ENCODE measurements at regions of chr7 and their contacts with region 1.

Region 1: DNA sequence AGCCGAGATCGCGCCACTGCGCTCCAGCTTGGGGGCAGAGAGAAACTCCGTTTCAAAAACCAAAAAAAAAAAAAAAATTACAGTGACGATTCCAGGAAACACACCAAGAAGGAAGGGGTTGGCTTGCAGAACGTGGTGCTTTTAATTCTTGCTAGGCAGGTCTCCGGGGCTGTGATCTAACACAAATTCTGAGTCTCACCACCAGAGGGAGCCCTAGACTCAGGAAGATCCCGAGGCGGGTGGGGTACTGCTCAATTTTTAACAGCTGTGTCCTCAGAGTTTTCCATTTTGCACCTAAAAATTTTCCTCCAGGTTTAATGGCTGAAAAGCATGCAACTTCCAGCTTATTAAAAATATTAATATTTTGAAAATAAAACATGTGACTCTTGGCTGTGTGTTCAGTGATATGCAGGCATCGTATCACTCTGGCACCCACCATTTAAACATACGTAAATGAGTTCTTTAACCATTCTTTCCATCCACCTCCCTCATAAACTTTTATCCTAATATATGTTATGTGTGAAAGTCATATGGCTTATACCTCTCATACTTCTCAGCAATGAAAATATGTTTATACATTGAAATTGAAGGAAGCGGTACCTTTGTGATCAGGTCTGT is 26.5 kb upstream of the NUB1 start:
- DNase-seq: peak; percentile 63 to 85 (median 78)
- H3K4me3 ChIP-seq: no peak overlapping the region
- H3K4me3 Mint-ChIP-seq: peak overlapping the region in 2 of 7 donors; percentile 44 to 64
- H3K27ac ChIP-seq: no peak overlapping the region
- H3K27ac Mint-ChIP-seq: peak overlapping the region in 2 of 8 donors; percentile 51 to 88
- H3K4me1 ChIP-seq: no peaks in the 10 kb centered on the region
- H3K4me1 Mint-ChIP-seq: peaks cover 3 to 5% (median 4%) of the 10 kb centered on the region in 3 donors
- H3K27me3 ChIP-seq: no peaks in the 10 kb centered on the region
- H3K27me3 Mint-ChIP-seq: peaks cover 0 to 4% of the 10 kb centered on the region in 2 donors

Region 2: DNA sequence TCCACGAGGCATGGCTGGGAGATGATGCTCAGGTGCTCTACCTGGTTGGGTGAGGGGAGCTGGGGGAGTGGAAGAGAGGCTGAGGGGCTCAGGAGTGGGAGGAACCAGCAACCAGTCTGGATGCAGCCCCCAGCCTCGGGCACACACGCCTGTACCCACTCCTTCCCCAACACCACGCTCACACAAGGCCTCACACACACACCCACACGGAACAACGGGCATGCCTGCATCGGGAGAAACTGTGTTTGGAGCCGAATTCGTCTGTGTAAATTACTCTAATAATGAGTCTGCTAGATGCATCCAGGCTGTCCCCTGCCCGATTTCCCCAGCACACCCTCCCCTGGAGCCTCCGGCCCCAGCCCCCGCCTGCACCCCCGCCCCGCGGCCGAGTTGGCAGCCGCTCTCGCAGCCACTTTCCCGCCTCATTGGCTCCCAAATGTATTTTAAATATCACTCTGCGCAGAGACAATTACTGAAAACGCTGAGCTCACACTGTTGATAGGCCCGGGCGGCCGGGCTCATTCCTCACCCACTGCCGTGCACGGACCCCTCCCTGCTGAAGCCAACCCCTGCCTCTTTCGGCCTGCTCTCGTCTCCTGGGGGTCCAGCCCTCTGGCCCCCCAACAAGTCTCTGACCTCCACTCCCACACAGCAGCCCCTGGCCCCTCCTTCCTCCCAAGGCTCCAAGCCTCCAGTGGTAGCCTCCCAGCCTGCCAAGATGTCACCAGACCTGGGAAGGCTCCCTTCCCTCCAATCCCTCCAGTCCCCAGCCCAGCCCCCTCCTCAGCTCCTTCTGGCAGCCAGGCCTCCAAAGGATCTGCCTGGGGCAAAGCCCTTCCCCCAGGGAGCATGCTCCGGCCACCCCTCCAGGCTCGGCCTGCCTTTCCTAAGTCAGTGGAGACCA is 116.0 kb before region 1 on chr7:
- CTCF ChIA-PET with region 1: no interaction called
- POLR2A ChIA-PET with region 1: no interaction called
- DNase-seq: no peak
- H3K4me3 ChIP-seq: no peak overlapping the region
- H3K4me3 Mint-ChIP-seq: no peak overlapping the region
- H3K27ac ChIP-seq: no peak overlapping the region
- H3K27ac Mint-ChIP-seq: peak overlapping the region in 1 of 8 donors; percentile 67
- H3K4me1 ChIP-seq: no peaks in the 10 kb centered on the region
- H3K4me1 Mint-ChIP-seq: peaks cover 8% of the 10 kb centered on the region in 3 donors
- H3K27me3 ChIP-seq: peaks cover 11% of the 10 kb centered on the region
- H3K27me3 Mint-ChIP-seq: peaks cover 5 to 9% of the 10 kb centered on the region in 2 donors

Region 3: DNA sequence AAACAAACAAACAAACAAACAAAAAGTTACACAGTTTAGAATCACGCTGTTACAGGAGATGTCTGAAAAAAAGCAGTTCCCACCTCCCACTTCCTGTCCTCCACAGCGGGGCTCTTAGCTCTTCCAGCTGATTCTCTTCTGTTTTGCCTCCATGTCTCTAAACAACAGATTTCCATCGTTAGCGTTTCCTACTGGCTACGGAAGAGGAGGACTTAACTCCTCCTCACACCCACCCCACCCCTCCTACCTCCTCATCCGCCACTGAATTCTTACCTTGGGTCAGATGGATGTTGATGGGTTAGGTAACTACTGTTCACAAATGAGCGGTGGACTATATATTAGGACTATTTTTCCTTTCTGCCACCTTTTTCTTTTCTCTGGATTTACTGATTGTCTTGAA is 10.3 kb before region 1 on chr7:
- CTCF ChIA-PET with region 1: interaction called, 22 read pairs
- POLR2A ChIA-PET with region 1: interaction called, 4 read pairs
- DNase-seq: no peak
- H3K4me3 ChIP-seq: no peak overlapping the region
- H3K4me3 Mint-ChIP-seq: peak overlapping the region in 3 of 7 donors; percentile 2 to 19 (median 11)
- H3K27ac ChIP-seq: no peak overlapping the region
- H3K27ac Mint-ChIP-seq: no peak overlapping the region
- H3K4me1 ChIP-seq: peaks cover 4% of the 10 kb centered on the region
- H3K4me1 Mint-ChIP-seq: peaks cover 6 to 8% (median 7%) of the 10 kb centered on the region in 3 donors
- H3K27me3 ChIP-seq: peaks cover 4% of the 10 kb centered on the region
- H3K27me3 Mint-ChIP-seq: peaks cover 18 to 54% of the 10 kb centered on the region in 2 donors

Region 4: GRCh38 chr7:151334628-151335027 is 19.5 kb after region 1 on chr7:
- CTCF ChIA-PET with region 1: interaction called, 24 read pairs
- POLR2A ChIA-PET with region 1: interaction called, 3 read pairs
- DNase-seq: no peak
- H3K4me3 ChIP-seq: no peak overlapping the region
- H3K4me3 Mint-ChIP-seq: no peak overlapping the region
- H3K27ac ChIP-seq: no peak overlapping the region
- H3K27ac Mint-ChIP-seq: no peak overlapping the region
- H3K4me1 ChIP-seq: no peaks in the 10 kb centered on the region
- H3K4me1 Mint-ChIP-seq: peaks cover under 1 to 6% (median under 1%) of the 10 kb centered on the region in 3 donors
- H3K27me3 ChIP-seq: no peaks in the 10 kb centered on the region
- H3K27me3 Mint-ChIP-seq: no peaks in the 10 kb centered on the region

Region 5: DNA sequence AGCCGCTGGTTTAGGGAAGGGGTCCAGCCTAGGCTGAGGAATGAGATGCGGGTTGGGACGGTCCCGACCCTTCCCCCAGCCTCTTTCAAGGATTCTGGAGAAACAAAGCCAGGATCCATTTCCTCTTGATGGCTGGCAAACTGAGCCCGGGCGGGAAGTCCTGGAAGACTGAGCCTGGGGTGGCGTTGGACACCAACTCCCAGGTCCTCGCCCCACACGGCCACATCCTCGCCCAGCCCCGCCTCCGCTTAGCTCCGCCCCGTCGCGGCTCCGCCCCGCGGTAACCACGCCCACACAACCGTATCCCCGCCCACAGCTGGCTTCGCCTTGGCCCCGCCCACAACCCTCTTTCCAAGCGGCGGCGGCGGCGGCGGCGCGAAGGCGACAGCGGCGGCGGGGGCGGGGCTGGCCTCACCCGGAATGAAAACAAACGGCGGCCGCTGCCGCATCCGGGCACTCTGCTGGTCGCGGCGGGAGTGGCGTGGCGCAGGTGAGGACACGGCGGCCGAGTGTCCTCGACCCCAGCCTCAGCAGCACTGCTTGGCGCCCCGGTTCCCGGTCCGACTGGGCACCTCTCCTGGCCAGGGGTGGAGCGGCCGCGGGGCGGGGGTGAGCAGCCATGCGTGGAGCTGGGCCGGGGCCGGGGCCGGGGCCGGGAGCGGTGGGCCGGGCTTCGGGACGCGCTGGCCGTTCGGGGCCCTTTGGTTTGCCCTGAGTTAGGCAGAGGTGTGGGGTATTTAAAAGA is 26.4 kb after region 1 on chr7 and contains the start of gene NUB1:
- CTCF ChIA-PET with region 1: interaction called, 24 read pairs
- POLR2A ChIA-PET with region 1: interaction called, 3 read pairs
- DNase-seq: peak; percentile 87 to 92 (median 89)
- H3K4me3 ChIP-seq: peak within 1 kb of the TSS; percentile 76
- H3K4me3 Mint-ChIP-seq: peak within 1 kb of the TSS; percentile 85 to 92 (median 89)
- H3K27ac ChIP-seq: peak within 1 kb of the TSS; percentile 84
- H3K27ac Mint-ChIP-seq: peak within 1 kb of the TSS; percentile 88 to 98 (median 93)
- H3K4me1 ChIP-seq: peaks cover 28% of the 10 kb centered on the region
- H3K4me1 Mint-ChIP-seq: peaks cover 26 to 41% (median 39%) of the 10 kb centered on the region in 3 donors
- H3K27me3 ChIP-seq: no peaks in the 10 kb centered on the region
- H3K27me3 Mint-ChIP-seq: no peaks in the 10 kb centered on the region
- total RNA-seq, gene NUB1: 39.1 to 46.1 TPM

Region 6: GRCh38 chr7:151351027-151351426 is 35.9 kb after region 1 on chr7:
- CTCF ChIA-PET with region 1: interaction called, 118 read pairs
- POLR2A ChIA-PET with region 1: interaction called, 4 read pairs
- DNase-seq: peak in 2 of 5 donors; percentile 13 to 20
- H3K4me3 ChIP-seq: no peak overlapping the region
- H3K4me3 Mint-ChIP-seq: peak overlapping the region in 6 of 7 donors; percentile 45 to 87 (median 74)
- H3K27ac ChIP-seq: peak overlapping the region; percentile 43
- H3K27ac Mint-ChIP-seq: peak overlapping the region; percentile 95 to 99 (median 96)
- H3K4me1 ChIP-seq: peaks cover 39% of the 10 kb centered on the region
- H3K4me1 Mint-ChIP-seq: peaks cover 38 to 73% (median 48%) of the 10 kb centered on the region in 3 donors
- H3K27me3 ChIP-seq: no peaks in the 10 kb centered on the region
- H3K27me3 Mint-ChIP-seq: peaks cover 0 to 2% of the 10 kb centered on the region in 2 donors

Region 7: DNA sequence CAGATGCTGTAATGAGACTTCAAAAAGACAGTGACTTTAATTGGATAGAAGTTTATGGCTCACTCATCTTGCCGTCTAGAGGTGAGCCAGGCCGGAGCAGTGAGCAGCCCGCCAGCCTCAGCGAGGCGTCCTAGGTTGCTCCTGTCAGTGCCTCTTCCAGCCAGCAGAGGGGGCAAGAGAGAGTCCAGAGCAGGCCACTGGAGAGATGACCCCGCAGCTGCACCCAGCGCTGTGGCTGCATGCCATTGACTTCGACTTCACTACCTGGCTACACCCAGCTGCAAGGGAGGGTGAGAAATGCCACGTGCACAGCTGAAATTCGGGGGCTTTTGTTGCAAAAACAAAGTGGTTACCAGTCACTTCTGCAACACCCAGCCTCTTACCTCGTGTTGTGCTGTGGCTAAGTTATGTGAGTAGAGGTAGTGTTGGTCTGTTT is 53.0 kb after region 1 on chr7:
- CTCF ChIA-PET with region 1: interaction called, 13 read pairs
- POLR2A ChIA-PET with region 1: no interaction called
- DNase-seq: peak; percentile 62 to 81 (median 72)
- H3K4me3 ChIP-seq: no peak overlapping the region
- H3K4me3 Mint-ChIP-seq: no peak overlapping the region
- H3K27ac ChIP-seq: no peak overlapping the region
- H3K27ac Mint-ChIP-seq: peak overlapping the region in 7 of 8 donors; percentile 56 to 83 (median 78)
- H3K4me1 ChIP-seq: peaks cover 9% of the 10 kb centered on the region
- H3K4me1 Mint-ChIP-seq: peaks cover 10 to 21% (median 14%) of the 10 kb centered on the region in 3 donors
- H3K27me3 ChIP-seq: no peaks in the 10 kb centered on the region
- H3K27me3 Mint-ChIP-seq: no peaks in the 10 kb centered on the region

Measured in CD8-positive, alpha-beta memory T cell (primary cell).